MCF 10A (cell line): ENCODE measurements at regions of chr14 and their contacts with region 1.

Region 1: GRCh38 chr14:75088574-75089373 is 19.3 kb downstream of the ZC2HC1C start:
- DNase-seq: peak; percentile 72
- H3K4me3 Mint-ChIP-seq: no peak overlapping the region
- H3K27ac Mint-ChIP-seq: no peak overlapping the region
- H3K4me1 Mint-ChIP-seq: no peaks in the 10 kb centered on the region
- H3K27me3 Mint-ChIP-seq: no peaks in the 10 kb centered on the region
- CTCF ChIP-seq: peak; percentile 75

Region 2: GRCh38 chr14:74893614-74894091 is 195.1 kb before region 1 on chr14:
- CTCF ChIA-PET with region 1: interaction called, 13 read pairs
- POLR2A ChIA-PET with region 1: no interaction called
- intact Hi-C with region 1: no loop called
- DNase-seq: no peak
- H3K4me3 Mint-ChIP-seq: no peak overlapping the region
- H3K27ac Mint-ChIP-seq: no peak overlapping the region
- H3K4me1 Mint-ChIP-seq: peaks cover 5% of the 10 kb centered on the region
- H3K27me3 Mint-ChIP-seq: no peaks in the 10 kb centered on the region
- CTCF ChIP-seq: no peak

Region 3: DNA sequence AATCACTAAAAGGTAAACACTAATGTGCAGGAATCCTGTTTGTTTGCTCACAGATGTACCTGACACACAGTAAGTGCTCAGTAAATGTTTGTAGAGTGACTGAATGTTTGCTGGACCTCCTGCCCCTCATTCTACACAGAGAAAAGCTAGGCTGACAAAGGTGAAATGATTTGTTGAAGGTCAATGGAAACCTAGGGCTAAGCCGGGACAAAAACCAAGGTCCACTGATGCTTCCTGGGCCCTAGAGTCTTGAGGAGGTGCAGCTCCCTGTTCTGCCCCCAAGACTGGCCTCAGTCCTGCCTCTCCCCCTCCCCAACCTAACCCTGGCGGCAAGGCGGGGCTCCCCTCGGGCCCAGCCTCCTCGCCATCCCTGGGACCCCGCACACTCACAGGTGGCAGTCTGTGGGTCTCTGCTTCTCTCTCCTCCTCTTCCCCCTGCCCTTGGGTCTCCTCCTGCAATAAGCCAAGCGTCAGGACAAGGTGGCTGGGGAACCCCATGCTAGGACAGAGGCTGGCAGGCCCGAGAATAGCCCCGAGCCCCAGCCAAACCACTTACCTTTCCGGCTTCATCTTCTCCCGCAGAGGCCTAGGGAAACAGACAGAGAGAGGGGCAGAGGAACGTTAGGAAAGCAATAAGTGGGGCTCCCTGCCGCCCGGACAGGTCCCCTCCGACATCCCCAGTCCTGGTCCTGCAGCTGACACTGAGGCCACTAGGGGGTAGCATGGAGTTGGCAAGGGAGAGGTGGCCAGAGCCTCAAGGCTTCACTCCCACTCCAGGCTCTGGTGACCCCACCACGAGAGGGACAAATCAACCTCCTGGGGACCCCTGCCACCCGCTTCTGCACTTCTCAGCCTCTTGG is 142.7 kb before region 1 on chr14:
- CTCF ChIA-PET with region 1: interaction called, 69 read pairs
- POLR2A ChIA-PET with region 1: no interaction called
- intact Hi-C with region 1: loop called (anchors 1 kb)
- DNase-seq: peak; percentile 78
- H3K4me3 Mint-ChIP-seq: peak overlapping the region; percentile 34
- H3K27ac Mint-ChIP-seq: peak overlapping the region; percentile 52
- H3K4me1 Mint-ChIP-seq: peaks cover 14% of the 10 kb centered on the region
- H3K27me3 Mint-ChIP-seq: no peaks in the 10 kb centered on the region
- CTCF ChIP-seq: peak; percentile 81

Region 4: GRCh38 chr14:75011356-75011994 is 77.3 kb before region 1 on chr14:
- CTCF ChIA-PET with region 1: interaction called, 11 read pairs
- POLR2A ChIA-PET with region 1: interaction called, 3 read pairs
- intact Hi-C with region 1: loop called (anchors 2 kb)
- DNase-seq: peak; percentile 33
- H3K4me3 Mint-ChIP-seq: no peak overlapping the region
- H3K27ac Mint-ChIP-seq: no peak overlapping the region
- H3K4me1 Mint-ChIP-seq: no peaks in the 10 kb centered on the region
- H3K27me3 Mint-ChIP-seq: no peaks in the 10 kb centered on the region
- CTCF ChIP-seq: no peak

Region 5: DNA sequence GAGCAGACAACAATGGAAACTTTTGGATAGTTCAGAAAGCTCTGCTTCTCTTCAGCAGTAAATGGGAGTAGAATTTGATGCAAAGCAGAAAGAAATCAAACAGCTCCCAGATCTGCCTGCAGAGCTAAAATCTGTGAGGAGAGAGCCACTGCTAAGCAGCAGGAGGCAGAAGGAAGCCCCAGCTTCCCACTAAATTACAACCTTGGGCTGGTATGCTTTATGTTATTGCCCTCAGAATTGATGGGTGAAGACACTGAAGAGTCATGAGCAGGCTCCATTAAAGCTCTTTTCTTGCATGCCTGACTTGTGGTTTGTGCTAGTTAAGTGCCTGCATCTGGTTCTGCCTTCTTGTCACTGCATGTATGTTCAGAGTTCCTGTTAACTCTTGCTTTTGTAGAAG is 11.0 kb before region 1 on chr14:
- CTCF ChIA-PET with region 1: interaction called, 24 read pairs
- POLR2A ChIA-PET with region 1: interaction called, 3 read pairs
- intact Hi-C with region 1: no loop called
- DNase-seq: no peak
- H3K4me3 Mint-ChIP-seq: no peak overlapping the region
- H3K27ac Mint-ChIP-seq: no peak overlapping the region
- H3K4me1 Mint-ChIP-seq: no peaks in the 10 kb centered on the region
- H3K27me3 Mint-ChIP-seq: no peaks in the 10 kb centered on the region
- CTCF ChIP-seq: no peak